CD8-positive, alpha-beta T cell (primary cell): ENCODE measurements at regions of chr2 and their contacts with region 1.

Region 1: DNA sequence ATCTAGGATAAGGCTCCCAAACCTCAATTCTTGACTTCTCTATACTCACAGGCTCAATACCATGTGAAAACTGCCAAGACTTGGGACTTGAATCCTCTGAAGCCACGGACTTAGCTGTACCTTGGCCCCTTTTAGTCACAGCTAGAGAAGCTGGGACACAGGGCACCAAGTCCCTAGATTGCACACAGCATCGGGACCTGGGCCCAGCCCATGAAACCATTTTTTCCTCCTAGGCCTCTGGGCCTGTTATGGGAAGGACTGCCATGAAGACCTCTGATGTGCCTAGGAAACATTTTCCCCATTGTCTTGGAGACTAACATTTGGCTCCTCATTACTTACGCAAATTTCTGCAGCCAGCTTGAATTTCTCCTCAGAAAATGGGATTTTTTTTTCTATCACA is 1011.8 kb upstream of the DDX18 start:
- DNase-seq: no peak
- ATAC-seq: no peak
- H3K4me3 ChIP-seq: no peak overlapping the region
- H3K4me3 Mint-ChIP-seq: no peak overlapping the region
- H3K27ac ChIP-seq: no peak overlapping the region
- H3K27ac Mint-ChIP-seq: no peak overlapping the region
- H3K4me1 ChIP-seq: no peaks in the 10 kb centered on the region
- H3K4me1 Mint-ChIP-seq: no peaks in the 10 kb centered on the region
- H3K27me3 ChIP-seq: no peaks in the 10 kb centered on the region
- H3K27me3 Mint-ChIP-seq: no peaks in the 10 kb centered on the region
- CTCF ChIP-seq: no peak

Region 2: GRCh38 chr2:116724550-116724949 is 78.1 kb before region 1 on chr2:
- CTCF ChIA-PET with region 1: no interaction called
- POLR2A ChIA-PET with region 1: no interaction called
- intact Hi-C with region 1: no loop called
- DNase-seq: no peak
- ATAC-seq: no peak
- H3K4me3 ChIP-seq: no peak overlapping the region
- H3K4me3 Mint-ChIP-seq: no peak overlapping the region
- H3K27ac ChIP-seq: no peak overlapping the region
- H3K27ac Mint-ChIP-seq: no peak overlapping the region
- H3K4me1 ChIP-seq: no peaks in the 10 kb centered on the region
- H3K4me1 Mint-ChIP-seq: no peaks in the 10 kb centered on the region
- H3K27me3 ChIP-seq: no peaks in the 10 kb centered on the region
- H3K27me3 Mint-ChIP-seq: no peaks in the 10 kb centered on the region
- CTCF ChIP-seq: no peak

Region 3: GRCh38 chr2:116761864-116762263 is 40.8 kb before region 1 on chr2:
- CTCF ChIA-PET with region 1: no interaction called
- POLR2A ChIA-PET with region 1: no interaction called
- intact Hi-C with region 1: no loop called
- DNase-seq: no peak
- ATAC-seq: no peak
- H3K4me3 ChIP-seq: no peak overlapping the region
- H3K4me3 Mint-ChIP-seq: no peak overlapping the region
- H3K27ac ChIP-seq: no peak overlapping the region
- H3K27ac Mint-ChIP-seq: no peak overlapping the region
- H3K4me1 ChIP-seq: no peaks in the 10 kb centered on the region
- H3K4me1 Mint-ChIP-seq: no peaks in the 10 kb centered on the region
- H3K27me3 ChIP-seq: no peaks in the 10 kb centered on the region
- H3K27me3 Mint-ChIP-seq: no peaks in the 10 kb centered on the region
- CTCF ChIP-seq: no peak

Region 4: GRCh38 chr2:116787848-116788247 is 14.8 kb before region 1 on chr2:
- CTCF ChIA-PET with region 1: no interaction called
- POLR2A ChIA-PET with region 1: no interaction called
- intact Hi-C with region 1: loop called in 1 of 2 experiments (anchors 1 kb)
- DNase-seq: no peak
- ATAC-seq: no peak
- H3K4me3 ChIP-seq: no peak overlapping the region
- H3K4me3 Mint-ChIP-seq: no peak overlapping the region
- H3K27ac ChIP-seq: no peak overlapping the region
- H3K27ac Mint-ChIP-seq: no peak overlapping the region
- H3K4me1 ChIP-seq: no peaks in the 10 kb centered on the region
- H3K4me1 Mint-ChIP-seq: no peaks in the 10 kb centered on the region
- H3K27me3 ChIP-seq: no peaks in the 10 kb centered on the region
- H3K27me3 Mint-ChIP-seq: no peaks in the 10 kb centered on the region
- CTCF ChIP-seq: no peak